Activated T-helper 2 cell treated with anti-CD3 and anti-CD28 coated beads, Interferon-gamma antibody, Interleukin-2, Interleukin-4, amounts not matched to agents 10 μg/mL and 5 μg/mL and 100 μg/mL, durations not matched to agents 14 hours and 24 hours and 36 hours (primary cell): ENCODE measurements at regions of chr11 and their contacts with region 1.

Region 1: DNA sequence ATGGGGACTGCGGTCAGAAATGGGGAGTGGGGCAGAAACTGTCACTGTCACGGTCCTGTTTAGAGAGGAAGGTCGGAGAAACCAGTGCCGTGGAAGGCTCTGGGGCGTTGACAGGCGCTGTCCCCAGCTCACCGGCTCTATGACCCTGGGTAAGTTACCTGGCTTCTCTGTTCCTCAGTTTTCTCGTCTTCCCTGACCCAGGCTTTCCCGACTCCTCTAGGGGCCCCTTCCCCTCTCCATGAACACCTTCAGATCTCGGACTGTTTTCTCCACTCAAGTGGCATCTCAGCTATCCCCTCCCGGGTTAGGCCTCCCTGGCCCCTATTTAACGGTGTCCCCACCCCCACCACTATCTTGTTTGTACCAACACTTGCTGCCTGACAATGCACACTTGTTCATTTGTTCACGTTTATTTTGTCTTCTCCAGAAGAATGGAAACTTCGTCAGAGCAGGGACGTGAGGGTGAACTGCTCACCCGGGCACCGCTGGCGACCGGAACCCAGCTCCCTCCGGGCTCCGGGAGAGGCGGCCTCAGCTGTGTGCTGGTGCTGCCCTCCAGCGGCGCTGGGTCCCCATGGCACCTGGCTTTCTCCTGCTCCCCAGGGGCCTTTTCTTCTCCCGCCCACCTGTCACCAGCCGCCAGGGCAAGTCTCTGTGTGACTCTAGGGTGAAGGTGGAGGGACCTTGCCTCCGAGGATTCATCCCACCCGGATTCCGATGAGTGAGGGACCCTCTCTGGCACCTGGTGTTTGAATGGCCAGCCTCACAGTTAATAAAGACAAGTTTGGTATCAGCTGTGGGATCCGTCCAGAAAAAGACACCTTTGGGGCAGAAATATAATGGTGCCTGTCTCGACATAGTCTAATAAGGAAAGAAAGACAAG is 33.1 kb upstream of the SLC35C1 start:
- DNase-seq: peak; percentile 74
- H3K4me3 Mint-ChIP-seq: peak overlapping the region; percentile 82
- H3K27ac Mint-ChIP-seq: no peak overlapping the region
- H3K4me1 Mint-ChIP-seq: peaks cover 17% of the 10 kb centered on the region
- H3K27me3 Mint-ChIP-seq: peaks cover 7% of the 10 kb centered on the region

Region 2: DNA sequence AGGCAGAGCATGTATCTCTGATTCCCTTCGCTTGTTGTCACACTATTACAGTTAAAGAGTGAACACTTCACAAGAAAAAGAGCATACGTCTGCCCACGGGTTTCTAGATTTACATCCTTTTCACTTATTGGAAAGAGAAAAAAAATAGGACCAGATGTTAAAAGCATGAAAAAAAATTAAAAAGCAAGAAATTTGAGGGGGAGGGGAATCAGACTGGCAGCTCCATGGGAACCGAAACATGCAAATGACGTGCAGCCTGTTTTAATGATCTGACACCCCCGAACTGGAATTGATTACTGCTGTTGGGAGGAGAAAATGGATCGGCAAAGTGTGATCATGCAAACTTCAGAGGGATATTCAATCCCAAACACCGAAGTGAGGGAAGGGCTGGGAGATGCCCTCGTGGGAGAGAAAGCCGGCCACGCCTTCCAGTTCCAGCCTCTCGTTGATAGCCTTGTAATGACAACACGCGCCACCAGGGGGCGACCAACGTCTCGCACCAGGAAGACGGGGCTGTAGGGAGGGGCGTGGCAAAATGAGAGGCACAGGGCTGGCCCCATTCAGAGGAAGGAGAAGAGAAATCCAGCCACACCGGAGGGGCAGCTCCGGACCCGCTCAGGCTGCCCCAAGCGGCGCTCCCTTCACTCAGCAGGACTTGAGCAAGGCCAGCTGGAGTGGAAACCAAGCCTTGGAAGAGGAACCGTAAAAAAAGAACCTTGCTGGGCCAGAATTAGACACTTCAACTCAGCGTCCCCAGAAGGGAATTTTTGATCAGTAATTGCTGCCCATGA is 431.9 kb before region 1 on chr11:
- intact Hi-C with region 1: loop called (anchors 1 kb)
- DNase-seq: peak; percentile 84
- H3K4me3 Mint-ChIP-seq: peak overlapping the region; percentile 59
- H3K27ac Mint-ChIP-seq: no peak overlapping the region
- H3K4me1 Mint-ChIP-seq: peaks cover 9% of the 10 kb centered on the region
- H3K27me3 Mint-ChIP-seq: peaks cover 24% of the 10 kb centered on the region

Region 3: GRCh38 chr11:45371251-45372115 is 400.3 kb before region 1 on chr11:
- intact Hi-C with region 1: loop called (anchors 2 kb)
- DNase-seq: peak; percentile 39
- H3K4me3 Mint-ChIP-seq: no peak overlapping the region
- H3K27ac Mint-ChIP-seq: no peak overlapping the region
- H3K4me1 Mint-ChIP-seq: peaks cover 8% of the 10 kb centered on the region
- H3K27me3 Mint-ChIP-seq: peaks cover 19% of the 10 kb centered on the region

Region 4: DNA sequence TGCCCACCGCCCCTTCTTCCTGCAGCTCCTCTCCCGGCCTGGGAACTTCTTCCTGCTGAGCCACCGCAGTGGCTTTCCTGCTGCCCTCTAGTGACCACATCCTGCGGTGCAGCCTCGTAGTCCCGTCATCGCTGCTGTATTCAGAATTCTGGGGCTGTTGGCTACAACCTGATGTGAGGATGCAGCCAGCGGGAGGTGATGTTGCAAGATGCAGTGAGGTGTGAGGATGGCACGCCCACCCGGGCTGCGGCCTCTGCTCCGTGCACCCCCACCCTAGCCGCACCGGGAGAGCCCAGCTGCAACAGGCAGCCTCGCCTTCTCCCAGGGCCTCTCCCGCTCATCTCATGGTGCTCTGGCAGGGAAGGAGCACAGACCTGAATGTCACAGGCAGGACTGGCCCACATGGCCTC is 116.5 kb before region 1 on chr11:
- intact Hi-C with region 1: loop called (anchors 5 kb)
- DNase-seq: peak; percentile 40
- H3K4me3 Mint-ChIP-seq: no peak overlapping the region
- H3K27ac Mint-ChIP-seq: no peak overlapping the region
- H3K4me1 Mint-ChIP-seq: peaks cover 6% of the 10 kb centered on the region
- H3K27me3 Mint-ChIP-seq: peaks cover 11% of the 10 kb centered on the region